PC-3 (cell line): ENCODE measurements at regions of chr10 and their contacts with region 1.

Region 1: DNA sequence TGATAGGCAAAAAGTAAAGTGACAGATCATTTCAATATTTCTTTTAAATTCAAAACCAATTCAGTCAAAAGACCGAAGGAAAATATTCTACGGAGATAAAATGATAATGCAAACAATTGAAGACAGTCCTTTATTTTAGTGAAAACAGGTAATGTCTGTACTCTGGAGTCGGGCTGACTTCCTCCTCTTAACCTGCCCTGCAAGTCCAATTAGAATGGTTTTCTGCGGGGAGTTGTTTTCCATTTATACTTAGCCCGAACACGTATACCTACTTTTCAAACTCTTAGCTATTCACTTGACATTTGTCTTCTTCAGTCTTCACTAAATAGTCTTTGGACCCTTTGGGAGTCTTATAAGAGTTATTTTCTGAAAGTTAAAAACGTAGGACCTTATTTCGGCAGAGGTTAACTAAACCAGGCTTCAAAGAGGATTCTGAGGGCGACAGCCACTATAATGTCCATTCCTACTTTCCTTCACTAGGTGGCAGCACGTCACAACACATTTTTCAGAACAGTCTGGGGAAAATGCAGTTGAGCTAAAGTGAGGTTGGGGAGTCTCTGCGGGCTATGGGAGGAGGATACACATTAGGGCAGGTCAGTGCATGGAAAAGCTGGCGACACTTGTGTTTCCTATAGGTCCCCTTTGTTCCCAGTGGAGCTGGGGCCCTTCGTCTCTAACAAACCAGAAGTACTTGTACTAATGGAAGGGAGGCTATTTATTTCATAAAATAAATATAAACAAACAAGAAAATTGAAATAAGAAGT is 472.0 kb downstream of the KCNMA1 start:
- DNase-seq: peak; percentile 100
- ATAC-seq: peak; percentile 16
- H3K4me3 ChIP-seq: peak overlapping the region; percentile 43
- H3K27ac ChIP-seq: no peak overlapping the region; the same call in 1 of the 2 replicates
- H3K4me1 ChIP-seq: peaks cover 32% of the 10 kb centered on the region
- H3K27me3 ChIP-seq: no peaks in the 10 kb centered on the region
- CTCF ChIP-seq: no peak

Region 2: DNA sequence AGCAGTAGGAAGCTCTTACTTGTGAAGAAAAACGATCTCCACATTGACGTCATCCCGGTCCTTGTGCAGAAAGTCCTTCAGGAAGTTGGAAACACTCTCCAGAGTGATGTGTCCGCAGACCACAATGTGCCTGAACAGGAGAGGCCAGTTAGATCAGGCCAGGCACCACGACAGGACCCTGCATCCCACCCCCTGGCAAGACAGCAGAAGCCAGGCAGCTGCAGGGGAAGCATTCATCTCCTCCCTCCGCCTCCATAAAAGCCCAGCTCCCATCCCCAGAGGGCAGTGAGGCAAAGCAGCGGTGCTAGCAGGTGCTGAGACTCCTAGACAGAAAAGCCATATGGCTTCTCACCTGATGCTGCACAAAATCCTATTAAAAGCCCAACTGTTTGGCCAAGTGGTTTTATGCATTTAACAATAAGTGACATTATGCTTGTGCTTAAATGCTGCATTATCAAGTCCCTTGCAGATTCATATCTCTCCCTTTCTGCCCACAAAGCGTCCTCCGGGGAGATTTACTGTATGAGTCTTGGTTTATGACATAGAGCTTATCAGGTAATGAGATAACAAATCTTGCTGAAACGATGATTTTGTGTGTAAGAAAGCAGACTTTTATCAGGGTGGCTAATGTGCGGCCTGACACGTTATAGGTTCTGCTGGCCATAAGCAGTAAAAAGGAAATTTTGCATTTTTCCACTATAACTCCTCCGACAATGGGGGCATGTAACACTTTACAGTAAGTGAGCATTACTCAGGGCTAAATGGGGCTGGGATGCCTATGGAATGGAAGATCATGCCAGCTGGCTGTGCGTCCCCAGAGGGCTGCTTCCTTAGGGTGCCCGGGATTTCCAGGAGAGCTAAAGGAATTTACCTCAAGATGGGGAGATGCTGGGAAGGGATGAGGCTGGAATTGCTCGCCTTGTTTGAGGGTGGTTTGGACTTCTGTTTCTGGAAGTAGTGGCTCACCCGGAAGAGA is 75.0 kb before region 1 on chr10:
- CTCF ChIA-PET with region 1: no interaction called
- POLR2A ChIA-PET with region 1: no interaction called
- intact Hi-C with region 1: no loop called
- DNase-seq: no peak
- ATAC-seq: no peak
- H3K4me3 ChIP-seq: no peak overlapping the region
- H3K27ac ChIP-seq: no peak overlapping the region
- H3K4me1 ChIP-seq: no peaks in the 10 kb centered on the region
- H3K27me3 ChIP-seq: no peaks in the 10 kb centered on the region
- CTCF ChIP-seq: no peak

Region 3: GRCh38 chr10:77111611-77112550 is 53.7 kb before region 1 on chr10:
- CTCF ChIA-PET with region 1: interaction called, 3 read pairs
- POLR2A ChIA-PET with region 1: interaction called, 3 read pairs
- intact Hi-C with region 1: loop called (anchors 1 kb)
- DNase-seq: peak; percentile 99
- ATAC-seq: peak; percentile 78
- H3K4me3 ChIP-seq: peak overlapping the region; percentile 4; the same call in 1 of the 2 replicates
- H3K27ac ChIP-seq: peak overlapping the region; percentile 69
- H3K4me1 ChIP-seq: peaks cover 25% of the 10 kb centered on the region
- H3K27me3 ChIP-seq: no peaks in the 10 kb centered on the region
- CTCF ChIP-seq: peak; percentile 100

Region 4: GRCh38 chr10:77240041-77240652 is 74.5 kb after region 1 on chr10:
- CTCF ChIA-PET with region 1: interaction called, 9 read pairs
- POLR2A ChIA-PET with region 1: interaction called, 5 read pairs
- intact Hi-C with region 1: loop called (anchors 1 kb)
- DNase-seq: peak; percentile 88
- ATAC-seq: peak; percentile 80
- H3K4me3 ChIP-seq: no peak overlapping the region
- H3K27ac ChIP-seq: peak overlapping the region; percentile 58
- H3K4me1 ChIP-seq: peaks cover 52% of the 10 kb centered on the region
- H3K27me3 ChIP-seq: no peaks in the 10 kb centered on the region
- CTCF ChIP-seq: no peak

Region 5: DNA sequence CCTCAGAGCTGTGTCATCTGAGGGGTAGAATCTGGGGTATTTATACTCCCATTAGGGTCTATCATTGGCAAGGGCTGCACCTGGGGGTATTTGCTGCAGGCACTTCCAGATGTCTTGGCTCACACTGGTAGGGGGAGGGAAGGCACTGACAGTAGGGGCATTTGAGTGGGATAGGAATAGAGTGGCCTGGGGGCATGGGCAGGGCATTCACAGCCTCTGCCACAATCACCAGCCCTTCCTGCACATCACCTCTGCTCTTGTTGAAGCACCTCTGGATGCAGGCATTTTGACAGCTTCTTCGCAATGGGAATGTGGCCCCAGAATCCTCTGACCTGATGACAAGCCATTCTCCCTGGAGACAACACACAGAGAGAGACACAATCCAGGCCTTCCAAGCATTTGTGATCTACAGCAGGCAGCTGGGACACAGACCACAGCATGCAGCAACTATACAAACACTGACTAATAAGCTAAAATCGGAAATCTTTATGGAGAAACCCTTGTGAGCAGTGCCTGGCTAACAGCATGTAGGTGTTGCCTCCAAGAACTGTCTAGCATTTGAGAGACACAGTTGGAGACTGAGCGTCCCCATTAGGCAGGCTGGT is 293.5 kb after region 1 on chr10:
- CTCF ChIA-PET with region 1: no interaction called
- POLR2A ChIA-PET with region 1: interaction called, 14 read pairs
- intact Hi-C with region 1: no loop called
- DNase-seq: peak; percentile 83
- ATAC-seq: peak; percentile 72
- H3K4me3 ChIP-seq: no peak overlapping the region
- H3K27ac ChIP-seq: no peak overlapping the region
- H3K4me1 ChIP-seq: peaks cover 41% of the 10 kb centered on the region
- H3K27me3 ChIP-seq: no peaks in the 10 kb centered on the region
- CTCF ChIP-seq: no peak

Region 6: DNA sequence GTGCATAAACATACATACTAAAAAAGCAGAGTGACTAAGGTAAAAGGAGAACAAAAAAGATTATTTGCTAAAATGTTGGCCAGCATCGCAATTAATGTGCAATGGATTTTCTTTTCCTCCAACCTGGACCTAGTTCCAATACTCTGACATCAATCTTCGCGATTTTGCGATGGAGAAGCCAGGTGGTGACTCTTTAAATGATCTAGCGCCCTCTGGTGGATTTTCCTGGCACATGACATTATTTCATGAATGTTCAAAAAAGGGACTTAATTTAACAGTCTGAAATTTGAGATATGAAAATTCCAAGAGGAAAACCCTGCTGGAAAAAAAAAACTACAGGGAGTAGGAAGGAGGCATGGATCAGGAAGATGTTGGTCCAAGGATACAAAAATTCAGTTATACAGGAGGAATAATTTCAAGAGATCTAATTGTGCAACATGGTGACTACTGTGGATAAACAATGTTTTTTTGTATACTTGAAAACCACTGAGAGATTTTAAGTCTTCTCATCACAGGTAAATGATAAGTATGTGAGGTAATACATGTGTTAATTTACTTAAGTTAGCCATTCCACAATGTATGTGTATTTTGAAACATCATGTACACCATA is 476.3 kb after region 1 on chr10:
- CTCF ChIA-PET with region 1: interaction called, 30 read pairs
- POLR2A ChIA-PET with region 1: no interaction called
- intact Hi-C with region 1: loop called (anchors 1 kb)
- DNase-seq: peak; percentile 100
- ATAC-seq: peak; percentile 13
- H3K4me3 ChIP-seq: no peak overlapping the region
- H3K27ac ChIP-seq: peak overlapping the region; percentile 2
- H3K4me1 ChIP-seq: peaks cover 35% of the 10 kb centered on the region
- H3K27me3 ChIP-seq: no peaks in the 10 kb centered on the region
- CTCF ChIP-seq: peak; percentile 100

Region 7: DNA sequence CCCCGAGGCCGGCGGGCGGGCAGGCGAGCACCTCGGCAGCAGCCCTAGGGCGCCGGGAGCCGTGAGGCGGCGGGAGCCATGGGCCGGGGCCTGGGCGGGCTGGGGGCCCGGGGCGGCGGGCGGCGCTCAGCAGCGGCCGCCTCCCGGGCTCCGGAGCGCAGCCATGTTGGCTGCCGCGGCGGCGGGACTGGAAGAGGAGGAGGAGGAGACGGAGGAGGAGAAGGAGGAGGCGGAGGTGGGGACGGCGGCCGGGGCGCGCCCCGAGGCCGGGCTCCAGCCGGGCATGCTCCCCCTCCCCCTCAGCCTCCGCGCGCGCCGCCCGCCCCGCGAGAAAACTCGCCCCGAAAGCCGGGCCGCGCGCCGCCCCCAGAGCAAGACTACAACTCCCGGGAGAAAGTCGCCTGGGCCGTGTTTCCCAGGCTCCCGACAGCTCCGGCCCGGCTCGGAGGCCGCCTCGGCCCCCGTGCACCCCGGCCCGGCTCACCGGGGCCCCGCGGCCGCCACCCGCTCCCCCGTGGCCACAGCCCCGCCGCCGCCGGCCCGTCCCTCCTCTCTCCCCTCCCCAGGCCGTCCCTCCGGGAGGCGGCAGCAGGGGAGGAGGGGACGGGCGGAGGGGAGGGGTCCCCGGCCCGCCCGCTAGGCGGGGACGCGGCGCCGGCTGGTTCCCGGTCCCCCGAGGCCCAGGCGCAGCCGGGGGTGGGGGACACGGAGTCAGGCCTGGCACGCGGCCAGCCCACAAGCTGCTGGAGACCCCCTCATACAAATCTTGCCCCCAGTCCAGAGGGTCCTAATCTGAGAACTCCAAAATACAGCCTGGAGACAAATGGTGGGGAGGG is 761.2 kb after region 1 on chr10 and contains the start of gene DLG5:
- CTCF ChIA-PET with region 1: no interaction called
- POLR2A ChIA-PET with region 1: no interaction called
- intact Hi-C with region 1: loop called (anchors 10 kb)
- DNase-seq: peak; percentile 89
- ATAC-seq: peak; percentile 77
- H3K4me3 ChIP-seq: peak within 1 kb of the TSS; percentile 74
- H3K27ac ChIP-seq: no peak within 1 kb of the TSS
- H3K4me1 ChIP-seq: peaks cover 39% of the 10 kb centered on the region
- H3K27me3 ChIP-seq: no peaks in the 10 kb centered on the region
- CTCF ChIP-seq: peak; percentile 34; the same call in 1 of the 2 replicates
- total RNA-seq, gene DLG5: 118 and 158 TPM in 2 replicates

Region 8: DNA sequence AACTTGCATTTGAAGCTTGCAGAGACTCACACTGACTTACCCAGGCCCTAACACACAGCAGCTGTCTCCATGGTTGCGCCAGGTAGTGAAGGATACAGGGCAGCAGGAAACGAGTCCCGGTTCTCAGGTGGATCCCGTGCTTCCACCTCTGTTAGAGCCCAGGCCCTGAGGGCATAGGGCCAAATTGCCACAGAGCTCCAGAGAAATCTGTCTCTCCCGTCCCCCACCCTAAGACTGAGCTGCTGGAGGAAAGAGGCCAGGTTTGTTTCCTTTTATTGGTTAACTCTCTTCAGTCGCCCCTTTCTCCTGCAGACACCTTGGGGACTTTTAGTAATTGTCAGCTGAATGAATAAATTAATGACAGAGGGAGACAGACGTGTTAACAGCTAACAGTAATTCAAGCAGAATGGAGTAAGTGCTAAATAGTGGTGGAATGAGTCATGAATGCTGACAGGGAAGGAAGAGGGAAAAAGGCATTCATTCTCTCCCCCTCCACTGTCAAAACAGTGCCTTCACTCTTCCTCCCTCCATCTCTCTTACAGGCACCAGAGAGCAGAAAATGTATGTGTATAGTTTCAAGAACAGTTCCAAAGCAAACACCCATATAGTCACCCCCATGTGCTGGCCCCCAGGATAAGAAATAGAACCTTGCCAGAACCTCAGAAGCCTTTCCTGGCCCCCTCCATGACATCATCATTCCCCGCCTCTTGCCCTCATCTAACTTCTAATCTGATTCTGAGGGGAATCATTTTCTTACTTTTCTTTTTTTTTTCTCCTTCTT is 777.7 kb after region 1 on chr10:
- CTCF ChIA-PET with region 1: no interaction called
- POLR2A ChIA-PET with region 1: no interaction called
- intact Hi-C with region 1: no loop called
- DNase-seq: peak; percentile 99
- ATAC-seq: peak; percentile 69
- H3K4me3 ChIP-seq: peak overlapping the region; percentile 4; the same call in 1 of the 2 replicates
- H3K27ac ChIP-seq: peak overlapping the region; percentile 72
- H3K4me1 ChIP-seq: peaks cover 32% of the 10 kb centered on the region
- H3K27me3 ChIP-seq: no peaks in the 10 kb centered on the region
- CTCF ChIP-seq: no peak